Activated T-helper 1 cell treated with anti-CD3 and anti-CD28 coated beads, Interleukin-12 subunit alpha, Interleukin-12 subunit beta, Interleukin-2, Interleukin-4 antibody, amounts not matched to agents 30 ng/mL and 10 ng/mL and 1 ng/mL, durations not matched to agents 14 hours and 24 hours and 36 hours (primary cell): ENCODE measurements at regions of chr1 and their contacts with region 1.

Region 1: GRCh38 chr1:174159252-174160108 is at the start of gene RABGAP1L:
- DNase-seq: peak; percentile 89
- H3K4me3 Mint-ChIP-seq: peak within 1 kb of the TSS; percentile 96
- H3K27ac Mint-ChIP-seq: peak within 1 kb of the TSS; percentile 96
- H3K4me1 Mint-ChIP-seq: peaks cover 66% of the 10 kb centered on the region
- H3K27me3 Mint-ChIP-seq: no peaks in the 10 kb centered on the region
- total RNA-seq, gene RABGAP1L: 40.6 and 41.0 TPM in 2 replicates

Region 2: GRCh38 chr1:172662464-172663109 is 1496.9 kb before region 1 on chr1:
- intact Hi-C with region 1: loop called (anchors 5 kb)
- DNase-seq: peak; percentile 79
- H3K4me3 Mint-ChIP-seq: peak overlapping the region; percentile 96
- H3K27ac Mint-ChIP-seq: peak overlapping the region; percentile 89
- H3K4me1 Mint-ChIP-seq: peaks cover 81% of the 10 kb centered on the region
- H3K27me3 Mint-ChIP-seq: no peaks in the 10 kb centered on the region

Region 3: DNA sequence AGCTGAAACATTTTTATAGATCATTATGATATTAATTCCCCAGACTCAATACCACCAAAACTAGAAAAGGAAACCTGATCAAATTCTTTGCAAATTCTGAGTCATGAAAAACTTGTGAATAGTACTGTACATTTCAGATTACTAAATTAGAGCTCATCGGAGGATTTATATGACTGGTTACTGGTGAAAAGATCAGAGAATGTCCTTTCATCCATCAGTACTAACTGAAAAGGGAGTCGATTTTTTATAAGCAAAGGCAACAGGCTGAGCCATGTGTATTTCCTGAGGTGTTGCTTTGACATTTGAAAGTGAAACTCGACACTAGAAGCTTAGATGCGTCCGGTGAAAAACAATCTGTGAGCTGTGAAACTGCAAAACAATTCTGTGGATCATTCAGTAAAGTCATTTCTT is 1264.4 kb before region 1 on chr1:
- intact Hi-C with region 1: loop called (anchors 10 kb)
- DNase-seq: peak; percentile 34
- H3K4me3 Mint-ChIP-seq: peak overlapping the region; percentile 28
- H3K27ac Mint-ChIP-seq: peak overlapping the region; percentile 7
- H3K4me1 Mint-ChIP-seq: peaks cover 42% of the 10 kb centered on the region
- H3K27me3 Mint-ChIP-seq: peaks cover 13% of the 10 kb centered on the region

Region 4: GRCh38 chr1:173476664-173477285 is 682.7 kb before region 1 on chr1:
- intact Hi-C with region 1: loop called (anchors 1 kb)
- DNase-seq: peak; percentile 74
- H3K4me3 Mint-ChIP-seq: peak overlapping the region; percentile 92
- H3K27ac Mint-ChIP-seq: peak overlapping the region; percentile 93
- H3K4me1 Mint-ChIP-seq: peaks cover 65% of the 10 kb centered on the region
- H3K27me3 Mint-ChIP-seq: no peaks in the 10 kb centered on the region

Region 5: GRCh38 chr1:173867753-173868265 is 291.7 kb before region 1 on chr1 and contains the start of gene GAS5:
- intact Hi-C with region 1: loop called (anchors 1 kb)
- DNase-seq: peak; percentile 99
- H3K4me3 Mint-ChIP-seq: peak within 1 kb of the TSS; percentile 98
- H3K27ac Mint-ChIP-seq: peak within 1 kb of the TSS; percentile 98
- H3K4me1 Mint-ChIP-seq: peaks cover 66% of the 10 kb centered on the region
- H3K27me3 Mint-ChIP-seq: no peaks in the 10 kb centered on the region
- total RNA-seq, gene GAS5: 653 and 688 TPM in 2 replicates

Region 6: GRCh38 chr1:173970252-173970651 is 189.2 kb before region 1 on chr1:
- intact Hi-C with region 1: no loop called
- DNase-seq: no peak
- H3K4me3 Mint-ChIP-seq: no peak overlapping the region
- H3K27ac Mint-ChIP-seq: no peak overlapping the region
- H3K4me1 Mint-ChIP-seq: no peaks in the 10 kb centered on the region
- H3K27me3 Mint-ChIP-seq: no peaks in the 10 kb centered on the region

Region 7: GRCh38 chr1:174968750-174969244 is 809.3 kb after region 1 on chr1:
- intact Hi-C with region 1: loop called (anchors 1 kb)
- DNase-seq: peak; percentile 41
- H3K4me3 Mint-ChIP-seq: peak overlapping the region; percentile 70
- H3K27ac Mint-ChIP-seq: peak overlapping the region; percentile 96
- H3K4me1 Mint-ChIP-seq: peaks cover 72% of the 10 kb centered on the region
- H3K27me3 Mint-ChIP-seq: no peaks in the 10 kb centered on the region